ENCODE measurements at regions of chr2 and their contacts with region 1.

Region 1: DNA sequence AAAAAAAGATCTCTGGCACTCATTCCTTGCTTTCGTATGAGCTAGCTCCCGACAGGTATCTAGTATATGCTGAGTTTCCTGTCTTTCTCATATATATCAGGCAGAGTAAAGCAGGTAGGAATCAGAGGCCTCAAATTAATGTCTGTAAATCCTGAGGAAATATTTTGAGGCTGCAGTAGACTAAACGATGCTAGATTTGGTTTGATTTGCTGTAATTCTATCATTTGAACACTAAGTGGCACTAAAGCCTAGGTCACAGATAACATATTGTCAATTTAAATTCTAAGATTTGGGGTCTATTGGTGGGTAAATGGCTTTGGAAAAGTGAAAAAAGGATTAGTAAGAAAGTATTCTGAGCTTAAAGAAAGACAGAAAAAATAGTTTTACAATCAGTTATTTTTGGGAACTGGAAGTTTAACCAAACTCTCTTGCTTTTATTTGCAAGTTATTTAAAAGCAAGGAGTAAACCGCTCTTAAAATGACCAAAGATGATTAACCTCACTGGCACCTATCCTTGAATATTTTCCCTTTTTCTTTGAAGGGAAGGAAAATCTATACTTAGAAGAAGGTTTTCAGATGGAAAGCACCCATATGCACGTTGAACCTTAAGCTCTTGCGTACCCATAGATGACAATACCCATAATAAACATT is 37.6 kb upstream of the SLC4A10 start:
- DNase-seq: no peak

Region 2: DNA sequence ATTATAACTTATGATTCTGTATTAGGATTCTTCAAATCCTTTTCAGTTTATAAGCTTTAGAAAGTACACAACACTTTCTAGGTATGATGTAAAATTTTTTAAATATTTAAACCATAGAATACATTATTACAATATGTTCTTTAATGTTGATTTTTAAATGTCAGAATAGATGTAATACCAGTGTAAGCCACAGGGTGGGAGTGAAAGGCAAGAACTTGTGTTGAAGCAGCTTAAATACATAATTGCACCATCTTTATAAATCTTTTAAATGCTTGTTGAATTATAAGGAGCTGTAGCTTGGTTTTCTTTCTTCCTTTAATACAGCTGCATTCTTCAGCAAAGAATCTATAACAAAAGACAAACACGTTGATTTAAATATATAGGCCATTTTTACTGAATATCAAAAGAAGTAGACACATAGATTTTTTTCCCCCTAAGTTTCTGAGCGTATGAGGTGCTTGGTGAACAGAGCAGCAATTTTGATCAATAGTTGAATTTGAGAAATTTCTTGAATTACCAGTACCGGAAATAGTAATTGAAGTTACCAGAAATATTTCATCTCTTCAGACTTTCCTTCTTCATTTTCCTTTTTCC is 363.4 kb before region 1 on chr2:
- intact Hi-C with region 1: loop called (anchors 10 kb)
- DNase-seq: no peak

Region 3: GRCh38 chr2:161400076-161400475 is 186.6 kb before region 1 on chr2:
- intact Hi-C with region 1: no loop called
- DNase-seq: no peak

Region 4: DNA sequence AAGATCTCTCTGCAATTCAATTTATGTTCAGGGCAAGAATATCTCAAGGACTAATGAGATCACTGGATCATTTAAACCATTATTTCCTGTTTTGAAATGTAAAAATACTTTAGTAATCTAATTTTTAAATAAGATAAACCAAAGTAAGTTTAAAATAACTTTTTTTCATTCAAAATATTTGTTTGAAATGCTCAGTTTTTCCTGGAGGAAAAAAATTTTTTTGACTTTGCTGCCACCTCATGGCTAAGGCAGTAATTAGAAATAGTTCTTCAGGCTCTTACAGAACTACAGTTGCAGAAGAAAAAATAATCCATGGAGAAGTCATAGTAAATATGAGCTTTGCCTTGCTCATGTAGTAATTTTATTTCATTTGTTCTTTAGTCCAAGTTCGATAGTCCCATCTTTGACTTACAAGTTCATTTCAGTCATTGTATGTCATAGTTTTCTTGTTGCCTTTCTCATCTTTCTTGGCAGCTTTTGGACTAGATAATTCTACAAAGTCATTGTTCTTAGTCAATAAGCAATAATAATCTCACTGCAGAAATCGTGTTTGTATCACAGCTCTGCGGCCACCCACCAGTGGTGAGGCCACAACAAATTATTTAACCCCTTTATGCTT is 360.0 kb after region 1 on chr2:
- intact Hi-C with region 1: loop called (anchors 2 kb)
- DNase-seq: no peak

Region 5: DNA sequence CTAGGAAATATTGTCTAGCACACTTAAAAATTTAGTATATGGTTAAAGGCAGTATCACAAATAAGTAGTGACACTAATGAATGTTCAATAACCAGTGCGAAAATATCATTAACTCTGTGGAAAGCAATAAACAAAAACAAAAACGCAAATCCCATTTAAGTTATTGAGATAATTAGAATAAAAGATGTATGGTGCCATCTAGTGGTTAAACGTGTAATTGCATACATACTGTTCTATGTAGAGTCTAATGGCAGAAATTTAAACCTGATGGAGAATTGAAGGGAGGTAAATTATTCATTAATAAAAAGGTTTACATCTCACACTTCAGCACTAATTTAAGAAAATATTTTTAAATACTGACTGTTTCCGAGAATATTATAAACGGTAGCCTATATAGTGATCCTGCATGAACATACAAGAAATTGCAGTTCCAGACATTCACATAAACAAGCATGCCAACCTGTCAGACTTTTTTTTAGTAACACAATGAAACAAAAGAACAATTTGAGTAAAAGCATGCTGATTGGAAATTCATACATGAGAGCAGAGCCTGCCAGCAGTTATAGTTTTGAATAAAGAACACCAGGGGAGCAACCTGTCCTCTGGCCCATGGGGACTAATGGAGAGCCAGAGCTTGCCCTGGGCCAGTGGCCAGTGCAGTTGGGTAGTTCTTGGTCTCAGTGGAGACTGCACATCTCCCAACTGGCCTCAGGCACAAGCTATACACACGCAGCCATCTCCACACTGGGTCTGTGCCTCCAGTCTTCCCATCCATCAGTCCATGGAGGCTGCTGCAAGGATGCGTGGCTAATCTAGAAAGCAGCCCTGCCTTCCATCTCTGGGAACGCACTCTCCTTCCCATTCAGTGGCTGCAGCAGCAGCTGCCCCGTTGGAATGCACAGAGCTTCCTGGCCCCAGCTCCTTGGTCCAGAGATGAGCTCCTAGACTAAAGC is 537.4 kb after region 1 on chr2:
- intact Hi-C with region 1: loop called (anchors 5 kb)
- DNase-seq: peak in 2 of 10 donors; percentile 59 to 60

Region 6: GRCh38 chr2:162297925-162298552 is 711.4 kb after region 1 on chr2:
- intact Hi-C with region 1: loop called (anchors 10 kb)
- DNase-seq: peak in 2 of 10 donors; percentile 31 to 61